Astrocyte of the cerebellum (primary cell): ENCODE measurements at regions of chr9 and their contacts with region 1.

Region 1: GRCh38 chr9:70406434-70406862 is 8.0 kb downstream of the KLF9 start:
- DNase-seq: no peak
- H3K4me3 ChIP-seq: no peak overlapping the region
- CTCF ChIP-seq: no peak

Region 2: GRCh38 chr9:70382709-70383605 is 23.5 kb before region 1 on chr9:
- in situ Hi-C with region 1: no loop called
- DNase-seq: no peak
- H3K4me3 ChIP-seq: no peak overlapping the region
- CTCF ChIP-seq: no peak

Region 3: GRCh38 chr9:70589571-70590314 is 183.3 kb after region 1 on chr9:
- in situ Hi-C with region 1: loop called (anchors 10 kb)
- DNase-seq: no peak
- H3K4me3 ChIP-seq: no peak overlapping the region
- CTCF ChIP-seq: no peak